ENCODE measurements at regions of chr12 and their contacts with region 1.

Region 1: GRCh38 chr12:65169320-65170208 is at the start of gene LEMD3:
- DNase-seq: peak; percentile 82 to 97
- H3K4me3 ChIP-seq: peak within 1 kb of the TSS; percentile 79 to 89
- H3K27ac ChIP-seq: peak within 1 kb of the TSS; percentile 97 to 99
- H3K4me1 ChIP-seq: peaks cover 2 to 28% of the 10 kb centered on the region in 2 donors
- H3K27me3 ChIP-seq: no peaks in the 10 kb centered on the region
- CTCF ChIP-seq: peak in 1 of 3 experiments; percentile 1
- total RNA-seq, gene LEMD3: 10.6 TPM

Region 2: GRCh38 chr12:65232476-65233077 is 63.0 kb after region 1 on chr12:
- intact Hi-C with region 1: loop called (anchors 5 kb)
- DNase-seq: no peak
- H3K4me3 ChIP-seq: no peak overlapping the region
- H3K27ac ChIP-seq: no peak overlapping the region
- H3K4me1 ChIP-seq: peaks cover 0 to 7% of the 10 kb centered on the region in 2 donors
- H3K27me3 ChIP-seq: no peaks in the 10 kb centered on the region
- CTCF ChIP-seq: peak; percentile 23 to 50 (median 41)

Region 3: DNA sequence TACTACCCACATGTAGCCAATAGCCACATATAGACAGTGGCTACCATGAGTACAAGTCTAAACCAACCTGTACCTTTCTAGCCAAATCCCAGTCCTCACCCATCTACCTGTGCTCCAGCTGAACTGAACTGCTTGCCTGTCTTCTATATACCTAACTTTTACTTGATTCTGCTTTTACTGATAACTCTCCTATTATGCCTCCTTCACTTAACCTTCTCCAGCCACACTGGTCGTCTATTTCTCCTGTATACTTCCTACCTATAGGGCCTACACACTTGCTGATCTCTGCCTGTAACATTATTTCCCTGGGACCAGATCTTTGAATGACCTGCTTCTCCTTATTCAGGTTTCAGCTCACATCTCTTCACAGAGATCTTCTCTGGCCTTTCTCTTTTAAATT is 83.0 kb after region 1 on chr12:
- intact Hi-C with region 1: loop called (anchors 5 kb)
- DNase-seq: no peak
- H3K4me3 ChIP-seq: no peak overlapping the region
- H3K27ac ChIP-seq: no peak overlapping the region
- H3K4me1 ChIP-seq: peaks cover 0 to 12% of the 10 kb centered on the region in 2 donors
- H3K27me3 ChIP-seq: no peaks in the 10 kb centered on the region
- CTCF ChIP-seq: no peak

Region 4: GRCh38 chr12:65278576-65279368 is 109.2 kb after region 1 on chr12 and contains the start of gene MSRB3:
- intact Hi-C with region 1: loop called (anchors 1 kb)
- DNase-seq: peak in 1 of 2 donors; percentile 88
- H3K4me3 ChIP-seq: peak within 1 kb of the TSS; percentile 79 to 94
- H3K27ac ChIP-seq: peak within 1 kb of the TSS; percentile 97 to 99
- H3K4me1 ChIP-seq: peaks cover 0 to 23% of the 10 kb centered on the region in 2 donors
- H3K27me3 ChIP-seq: no peaks in the 10 kb centered on the region
- CTCF ChIP-seq: peak in 1 of 3 experiments; percentile 11
- total RNA-seq, gene MSRB3: 79.4 TPM

Region 5: GRCh38 chr12:65364046-65364445 is 194.5 kb after region 1 on chr12:
- intact Hi-C with region 1: no loop called
- DNase-seq: no peak
- H3K4me3 ChIP-seq: no peak overlapping the region
- H3K27ac ChIP-seq: peak overlapping the region in 1 of 2 donors; percentile 45
- H3K4me1 ChIP-seq: peaks cover 2 to 8% of the 10 kb centered on the region in 2 donors
- H3K27me3 ChIP-seq: no peaks in the 10 kb centered on the region
- CTCF ChIP-seq: no peak